HepG2 (cell line): ENCODE measurements at regions of chr16 and their contacts with region 1.

Region 1: GRCh38 chr16:4475880-4476788 is at the start of gene HMOX2:
- DNase-seq: peak; percentile 86
- ATAC-seq: peak; percentile 93
- H3K4me3 ChIP-seq: peak within 1 kb of the TSS; percentile 70 to 90 (median 75)
- H3K27ac ChIP-seq: peak within 1 kb of the TSS; percentile 78
- H3K4me1 ChIP-seq: peaks cover 42% of the 10 kb centered on the region
- H3K27me3 ChIP-seq: no peaks in the 10 kb centered on the region
- CTCF ChIP-seq: peak; percentile 80
- EP300 ChIP-seq: 0 out of 4 replicates have a peak, but pooled peaks have one; percentile 15 to 26
- POLR2A ChIP-seq: peak; percentile 85 to 99
- RAD21 ChIP-seq: peak; percentile 74
- total RNA-seq, gene HMOX2: 70.4 and 82.4 TPM in 2 replicates

Region 2: DNA sequence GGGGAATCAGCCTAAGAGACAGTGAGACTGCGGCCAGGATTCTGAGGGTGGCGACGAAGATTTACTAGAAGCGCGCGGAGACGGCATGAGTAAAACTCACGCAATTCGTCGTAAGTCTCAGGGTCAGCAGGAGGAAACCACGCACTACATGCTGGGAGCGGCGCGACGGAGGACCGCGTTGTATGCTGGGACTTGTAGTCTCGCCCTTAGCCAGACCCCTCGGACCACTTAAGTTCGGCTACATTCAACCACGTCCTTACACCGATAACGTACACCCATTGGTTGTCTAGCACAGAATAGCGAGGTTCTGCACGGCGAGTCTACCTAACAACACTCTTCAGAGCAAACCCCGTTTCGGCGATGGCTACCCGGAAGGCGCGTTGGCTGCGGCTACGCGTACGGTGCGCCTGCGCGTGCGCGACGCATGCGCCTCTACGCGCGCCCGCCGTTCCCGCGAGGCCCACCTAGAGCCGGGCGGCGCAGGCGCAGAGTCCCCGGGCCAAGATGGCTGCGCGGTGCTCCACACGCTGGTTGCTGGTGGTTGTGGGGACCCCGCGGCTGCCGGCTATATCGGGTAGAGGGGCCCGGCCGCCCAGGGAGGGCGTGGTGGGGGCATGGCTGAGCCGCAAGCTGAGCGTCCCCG is 50.6 kb before region 1 on chr16 and contains the start of gene DNAJA3:
- CTCF ChIA-PET with region 1: no interaction called
- POLR2A ChIA-PET with region 1: interaction called, 10 read pairs
- in situ Hi-C with region 1: no loop called
- intact Hi-C with region 1: loop called (anchors 5 kb)
- DNase-seq: peak; percentile 89
- ATAC-seq: peak; percentile 93
- H3K4me3 ChIP-seq: peak within 1 kb of the TSS; percentile 82 to 85 (median 84)
- H3K27ac ChIP-seq: peak within 1 kb of the TSS; percentile 99
- H3K4me1 ChIP-seq: peaks cover 39% of the 10 kb centered on the region
- H3K27me3 ChIP-seq: no peaks in the 10 kb centered on the region; a peak in 1 of 5 replicates
- CTCF ChIP-seq: no peak
- EP300 ChIP-seq: no peak
- POLR2A ChIP-seq: peak; percentile 80 to 90
- RAD21 ChIP-seq: no peak; the same call in 1 of the 2 replicates
- total RNA-seq, gene DNAJA3: 75.3 and 77.0 TPM in 2 replicates

Region 3: GRCh38 chr16:4529085-4530060 is 53.2 kb after region 1 on chr16:
- CTCF ChIA-PET with region 1: no interaction called
- POLR2A ChIA-PET with region 1: no interaction called
- in situ Hi-C with region 1: no loop called
- intact Hi-C with region 1: no loop called
- DNase-seq: no peak
- ATAC-seq: no peak
- H3K4me3 ChIP-seq: no peak overlapping the region
- H3K27ac ChIP-seq: no peak overlapping the region
- H3K4me1 ChIP-seq: peaks cover 31% of the 10 kb centered on the region
- H3K27me3 ChIP-seq: no peaks in the 10 kb centered on the region
- CTCF ChIP-seq: no peak
- EP300 ChIP-seq: no peak
- POLR2A ChIP-seq: no peak
- RAD21 ChIP-seq: no peak